PC-9 (cell line): ENCODE measurements at regions of chr4 and their contacts with region 1.

Region 1: GRCh38 chr4:14871676-14872430 is 130.4 kb upstream of the CPEB2 start:
- DNase-seq: peak; percentile 51 to 71
- H3K4me3 ChIP-seq: no peak overlapping the region
- H3K27ac ChIP-seq: no peak overlapping the region
- H3K4me1 ChIP-seq: no peaks in the 10 kb centered on the region
- H3K27me3 ChIP-seq: no peaks in the 10 kb centered on the region
- CTCF ChIP-seq: peak; percentile 67

Region 2: GRCh38 chr4:14726441-14727405 is 145.1 kb before region 1 on chr4:
- CTCF ChIA-PET with region 1: no interaction called
- POLR2A ChIA-PET with region 1: no interaction called
- intact Hi-C with region 1: loop called (anchors 10 kb)
- DNase-seq: peak; percentile 70 to 89
- H3K4me3 ChIP-seq: peak overlapping the region; percentile 4; the same call in 1 of the 2 replicates
- H3K27ac ChIP-seq: peak overlapping the region; percentile 61
- H3K4me1 ChIP-seq: peaks cover 18% of the 10 kb centered on the region
- H3K27me3 ChIP-seq: no peaks in the 10 kb centered on the region
- CTCF ChIP-seq: no peak

Region 3: GRCh38 chr4:15132739-15133138 is 260.9 kb after region 1 on chr4:
- CTCF ChIA-PET with region 1: interaction called, 10 read pairs
- POLR2A ChIA-PET with region 1: no interaction called
- intact Hi-C with region 1: no loop called
- DNase-seq: no peak
- H3K4me3 ChIP-seq: no peak overlapping the region
- H3K27ac ChIP-seq: no peak overlapping the region
- H3K4me1 ChIP-seq: no peaks in the 10 kb centered on the region
- H3K27me3 ChIP-seq: no peaks in the 10 kb centered on the region
- CTCF ChIP-seq: no peak

Region 4: GRCh38 chr4:15162465-15163283 is 290.8 kb after region 1 on chr4:
- CTCF ChIA-PET with region 1: no interaction called
- POLR2A ChIA-PET with region 1: no interaction called
- intact Hi-C with region 1: loop called (anchors 10 kb)
- DNase-seq: peak in 1 of 2 experiments; percentile 48
- H3K4me3 ChIP-seq: no peak overlapping the region
- H3K27ac ChIP-seq: no peak overlapping the region
- H3K4me1 ChIP-seq: peaks cover 15% of the 10 kb centered on the region
- H3K27me3 ChIP-seq: no peaks in the 10 kb centered on the region
- CTCF ChIP-seq: peak; percentile 51; the same call in 1 of the 2 replicates

Region 5: GRCh38 chr4:15291122-15291521 is 419.3 kb after region 1 on chr4:
- CTCF ChIA-PET with region 1: no interaction called
- POLR2A ChIA-PET with region 1: no interaction called
- intact Hi-C with region 1: no loop called
- DNase-seq: no peak
- H3K4me3 ChIP-seq: no peak overlapping the region
- H3K27ac ChIP-seq: no peak overlapping the region
- H3K4me1 ChIP-seq: no peaks in the 10 kb centered on the region
- H3K27me3 ChIP-seq: no peaks in the 10 kb centered on the region
- CTCF ChIP-seq: no peak